ENCODE measurements at regions of chr7 and their contacts with region 1.

Region 1: DNA sequence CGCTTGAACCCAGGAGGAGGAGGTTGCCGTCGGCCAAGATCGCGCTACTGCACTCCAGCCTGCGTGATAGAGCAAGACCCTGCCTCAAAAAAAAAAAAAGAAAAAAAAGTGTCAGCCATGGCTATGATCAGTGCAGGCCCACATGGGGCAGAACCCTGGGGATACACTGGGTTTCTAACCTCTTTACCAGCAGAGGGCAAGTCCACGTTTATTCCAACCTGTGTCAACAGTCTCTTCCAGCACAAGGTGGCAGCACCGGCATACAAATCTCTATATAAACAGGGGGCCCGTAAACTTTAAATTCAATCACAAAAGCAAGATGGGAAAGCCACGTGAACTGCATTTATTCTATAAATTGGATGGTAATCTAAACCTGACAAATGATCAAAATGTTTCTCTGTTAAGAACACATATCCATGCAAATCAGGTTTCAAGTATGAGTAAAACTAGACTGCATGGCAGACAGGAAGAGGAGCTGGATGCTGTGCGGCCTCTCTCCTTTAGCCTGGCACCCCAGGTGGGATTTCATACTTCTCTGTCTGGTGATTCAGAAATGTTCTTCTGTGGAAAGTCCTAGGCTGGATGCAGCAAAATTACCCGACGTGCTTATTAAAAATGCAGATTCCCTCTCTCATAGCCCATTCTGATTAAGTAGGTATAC is 60.0 kb upstream of the STEAP1B start:
- DNase-seq: peak in 1 of 2 donors; percentile 81
- H3K4me3 ChIP-seq: no peak overlapping the region
- H3K27ac ChIP-seq: no peak overlapping the region
- H3K4me1 ChIP-seq: peaks cover 21% of the 10 kb centered on the region
- H3K27me3 ChIP-seq: no peaks in the 10 kb centered on the region
- CTCF ChIP-seq: peak; percentile 60 to 91 (median 81)
- POLR2A ChIP-seq: no peak

Region 2: DNA sequence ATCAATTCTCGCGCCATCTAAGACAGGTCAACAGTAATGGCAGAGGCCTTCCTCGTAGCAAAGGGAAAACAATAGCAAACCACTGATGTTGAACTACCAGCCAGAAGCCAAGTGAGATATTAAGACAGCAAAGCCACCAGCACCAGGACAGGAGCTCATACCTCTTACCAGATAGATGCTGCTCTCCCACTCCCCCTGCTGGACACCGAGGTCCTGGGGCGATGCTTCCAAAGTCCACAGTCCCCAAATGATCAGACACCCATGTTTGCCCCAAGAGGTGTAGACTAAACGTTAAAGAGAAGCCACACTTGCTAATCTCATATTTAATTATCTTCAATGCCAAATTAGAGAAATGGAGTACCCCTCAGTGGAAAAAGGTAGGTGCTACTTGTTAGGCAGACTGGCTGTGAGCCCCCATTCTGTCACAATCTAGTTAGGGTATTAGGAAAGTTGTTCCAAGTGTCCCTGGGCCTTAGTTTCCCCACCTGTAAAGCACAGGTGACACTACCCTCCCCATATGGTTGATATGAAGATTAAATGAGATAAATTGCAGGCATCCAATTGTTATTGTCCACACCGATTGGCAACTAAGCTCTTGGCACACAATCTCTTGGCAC is 222.8 kb after region 1 on chr7:
- intact Hi-C with region 1: loop called (anchors 5 kb)
- DNase-seq: no peak
- H3K4me3 ChIP-seq: no peak overlapping the region
- H3K27ac ChIP-seq: no peak overlapping the region
- H3K4me1 ChIP-seq: no peaks in the 10 kb centered on the region
- H3K27me3 ChIP-seq: no peaks in the 10 kb centered on the region
- CTCF ChIP-seq: peak; percentile 16 to 37 (median 33)
- POLR2A ChIP-seq: no peak

Region 3: DNA sequence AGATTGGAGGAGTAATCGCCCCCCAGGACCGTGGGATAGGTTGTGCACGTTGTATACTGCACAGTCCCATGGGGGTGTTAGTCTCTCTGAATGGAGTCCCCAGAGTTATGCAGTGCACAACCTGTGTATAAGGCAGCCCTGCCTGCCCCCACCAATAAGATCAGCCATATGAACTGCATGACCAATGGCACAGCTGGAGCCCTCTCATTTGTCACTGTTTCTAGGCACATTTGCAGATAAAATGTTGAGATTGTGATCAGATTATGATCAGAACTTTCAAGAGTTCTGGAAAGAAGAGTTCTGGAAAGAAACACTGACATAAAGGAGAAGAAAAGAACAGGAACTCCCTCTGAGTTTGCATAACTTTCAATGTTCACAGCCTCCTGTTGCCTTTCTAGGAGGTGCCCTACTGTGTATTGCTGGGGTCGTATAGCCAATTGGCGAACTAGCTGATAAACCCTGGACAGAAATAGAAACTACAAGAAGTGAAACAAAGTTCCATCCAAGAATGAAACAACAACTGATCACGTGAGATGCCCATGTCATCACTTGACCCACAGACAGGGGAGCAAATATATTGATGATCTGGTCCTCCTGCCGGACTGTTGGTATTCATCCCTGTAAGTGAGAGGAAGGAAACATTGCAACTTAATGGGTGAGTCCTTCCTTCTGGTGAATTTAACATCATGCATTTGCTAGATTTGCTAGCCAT is 312.3 kb after region 1 on chr7:
- intact Hi-C with region 1: no loop called
- DNase-seq: no peak
- H3K4me3 ChIP-seq: no peak overlapping the region
- H3K27ac ChIP-seq: no peak overlapping the region
- H3K4me1 ChIP-seq: no peaks in the 10 kb centered on the region
- H3K27me3 ChIP-seq: no peaks in the 10 kb centered on the region
- CTCF ChIP-seq: no peak
- POLR2A ChIP-seq: no peak

Region 4: GRCh38 chr7:23055582-23056178 is 495.7 kb after region 1 on chr7:
- intact Hi-C with region 1: loop called (anchors 5 kb)
- DNase-seq: no peak
- H3K4me3 ChIP-seq: no peak overlapping the region
- H3K27ac ChIP-seq: no peak overlapping the region
- H3K4me1 ChIP-seq: no peaks in the 10 kb centered on the region
- H3K27me3 ChIP-seq: no peaks in the 10 kb centered on the region
- CTCF ChIP-seq: peak; percentile 66 to 75 (median 75)
- POLR2A ChIP-seq: no peak